Colonic mucosa (tissue), 4 donors: ENCODE measurements at regions of chr1 and their contacts with region 1.

Region 1: GRCh38 chr1:29124366-29125236 is 898 bp upstream of the TMEM200B start:
- DNase-seq: peak; percentile 63
- H3K4me3 ChIP-seq: peak overlapping the region; percentile 51
- H3K27ac ChIP-seq: peak overlapping the region; percentile 80
- H3K4me1 ChIP-seq: peaks cover 11% of the 10 kb centered on the region
- H3K27me3 ChIP-seq: peaks cover 45% of the 10 kb centered on the region
- CTCF ChIP-seq: peak; percentile 42

Region 2: GRCh38 chr1:28927648-28928313 is 196.8 kb before region 1 on chr1:
- intact Hi-C with region 1: no loop called
- DNase-seq: no peak
- H3K4me3 ChIP-seq: no peak overlapping the region
- H3K27ac ChIP-seq: peak overlapping the region; percentile 73
- H3K4me1 ChIP-seq: peaks cover 18% of the 10 kb centered on the region
- H3K27me3 ChIP-seq: no peaks in the 10 kb centered on the region
- CTCF ChIP-seq: no peak

Region 3: DNA sequence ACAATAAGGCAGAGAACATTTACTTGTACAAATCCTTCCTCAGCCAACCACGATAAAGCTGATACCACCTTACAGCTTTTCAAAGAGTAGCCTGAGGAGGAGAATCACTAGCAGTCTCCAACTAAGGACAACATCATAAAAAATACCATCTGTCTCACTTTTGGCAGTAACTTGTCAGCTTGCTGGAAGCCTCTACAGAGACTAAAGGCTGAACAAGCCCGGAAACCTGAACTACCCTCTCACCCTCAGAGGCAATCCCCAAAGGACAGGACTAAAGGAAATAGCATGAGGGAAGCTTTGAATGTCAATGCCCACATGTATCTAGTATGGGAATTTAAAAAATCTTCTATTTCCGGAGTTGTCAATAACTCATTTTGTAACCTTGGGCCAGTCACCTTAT is 46.5 kb after region 1 on chr1:
- intact Hi-C with region 1: loop called (anchors 10 kb)
- DNase-seq: no peak
- H3K4me3 ChIP-seq: no peak overlapping the region
- H3K27ac ChIP-seq: no peak overlapping the region
- H3K4me1 ChIP-seq: no peaks in the 10 kb centered on the region
- H3K27me3 ChIP-seq: no peaks in the 10 kb centered on the region
- CTCF ChIP-seq: no peak